ENCODE measurements at regions of chr5 and their contacts with region 1.

Region 1: DNA sequence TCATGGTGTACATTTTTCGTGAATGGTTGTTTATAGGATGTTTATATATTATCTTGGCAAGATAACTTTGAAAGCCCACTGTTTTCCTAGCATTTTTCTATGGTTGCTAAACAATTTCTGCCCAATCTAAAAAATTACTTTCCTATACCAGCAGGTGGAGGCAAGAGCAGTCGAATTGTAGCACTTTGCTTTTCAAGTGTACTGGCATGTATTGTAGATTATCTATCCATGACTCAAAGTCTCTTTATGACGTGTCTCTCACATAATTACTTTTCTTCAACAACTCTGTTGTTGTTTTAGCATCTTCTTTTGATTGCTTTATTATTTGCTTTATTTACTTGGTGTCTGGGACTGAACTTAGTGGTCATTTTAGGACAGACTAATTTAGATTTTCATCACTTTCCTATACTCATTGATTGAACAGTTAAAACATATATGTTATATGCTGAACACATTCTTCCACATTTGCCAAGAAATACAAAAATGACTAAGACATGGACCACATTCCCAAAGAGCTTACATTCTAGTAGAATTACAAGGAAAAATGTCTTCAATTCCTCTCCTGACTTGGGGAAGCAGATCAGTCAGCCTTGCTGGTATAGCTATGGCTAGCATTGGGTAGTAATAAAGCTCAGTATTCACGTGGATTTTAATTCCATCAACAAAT is 20.7 kb downstream of the NLN start:
- DNase-seq: peak; percentile 12 to 62
- H3K4me3 ChIP-seq: no peak overlapping the region
- H3K27ac ChIP-seq: no peak overlapping the region; the same call in 1 of the 2 replicates
- H3K4me1 ChIP-seq: peaks cover 5% of the 10 kb centered on the region
- H3K27me3 ChIP-seq: no peaks in the 10 kb centered on the region
- CTCF ChIP-seq: peak; percentile 86

Region 2: GRCh38 chr5:66039296-66039695 is 296.6 kb after region 1 on chr5:
- CTCF ChIA-PET with region 1: no interaction called
- POLR2A ChIA-PET with region 1: no interaction called
- intact Hi-C with region 1: loop called (anchors 5 kb)
- DNase-seq: no peak
- H3K4me3 ChIP-seq: no peak overlapping the region
- H3K27ac ChIP-seq: no peak overlapping the region
- H3K4me1 ChIP-seq: no peaks in the 10 kb centered on the region
- H3K27me3 ChIP-seq: no peaks in the 10 kb centered on the region
- CTCF ChIP-seq: no peak

Region 3: GRCh38 chr5:66382152-66382551 is 639.5 kb after region 1 on chr5:
- CTCF ChIA-PET with region 1: no interaction called
- POLR2A ChIA-PET with region 1: no interaction called
- intact Hi-C with region 1: no loop called
- DNase-seq: no peak
- H3K4me3 ChIP-seq: no peak overlapping the region
- H3K27ac ChIP-seq: no peak overlapping the region
- H3K4me1 ChIP-seq: no peaks in the 10 kb centered on the region
- H3K27me3 ChIP-seq: no peaks in the 10 kb centered on the region
- CTCF ChIP-seq: no peak